Activated CD4-positive, alpha-beta T cell treated with anti-CD3 and anti-CD28 coated beads, Interleukin-2, amount 10 ng/mL, durations not matched to agents 7 days and 5 days (primary cell): ENCODE measurements at regions of chr7 and their contacts with region 1.

Region 1: GRCh38 chr7:149850007-149850594 is 11.9 kb downstream of the ZNF862 start:
- DNase-seq: no peak
- H3K4me3 Mint-ChIP-seq: no peak overlapping the region
- H3K27ac Mint-ChIP-seq: no peak overlapping the region
- H3K4me1 Mint-ChIP-seq: peaks cover 20% of the 10 kb centered on the region
- H3K27me3 Mint-ChIP-seq: no peaks in the 10 kb centered on the region

Region 2: GRCh38 chr7:149838224-149838947 is 11.7 kb before region 1 on chr7 and contains the start of gene ZNF862:
- CTCF ChIA-PET with region 1: interaction called, 20 read pairs
- POLR2A ChIA-PET with region 1: no interaction called
- DNase-seq: peak; percentile 97
- H3K4me3 Mint-ChIP-seq: peak within 1 kb of the TSS; percentile 80
- H3K27ac Mint-ChIP-seq: peak within 1 kb of the TSS; percentile 87
- H3K4me1 Mint-ChIP-seq: peaks cover 25% of the 10 kb centered on the region
- H3K27me3 Mint-ChIP-seq: peaks cover 7% of the 10 kb centered on the region
- total RNA-seq, gene ZNF862: 31.3 to 35.8 TPM